ENCODE measurements at regions of chr14 and their contacts with region 1.

Region 1: GRCh38 chr14:37985826-37986470 is 221.8 kb upstream of the SSTR1 start:
- DNase-seq: peak in 1 of 2 experiments; percentile 15
- H3K4me3 ChIP-seq: no peak overlapping the region
- H3K4me3 Mint-ChIP-seq: no peak overlapping the region
- H3K27ac Mint-ChIP-seq: no peak overlapping the region
- H3K4me1 ChIP-seq: no peaks in the 10 kb centered on the region
- H3K4me1 Mint-ChIP-seq: no peaks in the 10 kb centered on the region
- H3K27me3 ChIP-seq: no peaks in the 10 kb centered on the region
- H3K27me3 Mint-ChIP-seq: no peaks in the 10 kb centered on the region
- CTCF ChIP-seq: peak; percentile 58 to 63

Region 2: GRCh38 chr14:38197001-38197783 is 211.2 kb after region 1 on chr14:
- CTCF ChIA-PET with region 1: no interaction called
- POLR2A ChIA-PET with region 1: no interaction called
- intact Hi-C with region 1: loop called (anchors 5 kb)
- DNase-seq: no peak
- H3K4me3 ChIP-seq: no peak overlapping the region
- H3K4me3 Mint-ChIP-seq: no peak overlapping the region
- H3K27ac Mint-ChIP-seq: no peak overlapping the region
- H3K4me1 ChIP-seq: no peaks in the 10 kb centered on the region
- H3K4me1 Mint-ChIP-seq: no peaks in the 10 kb centered on the region
- H3K27me3 ChIP-seq: no peaks in the 10 kb centered on the region
- H3K27me3 Mint-ChIP-seq: peaks cover 5% of the 10 kb centered on the region
- CTCF ChIP-seq: peak; percentile 36 to 46

Measured in Caco-2 (cell line).